ENCODE measurements at regions of chr13 and their contacts with region 1.

Region 1: GRCh38 chr13:80516818-80517348 is 176.0 kb upstream of the SPRY2 start:
- DNase-seq: peak in 2 of 4 experiments; percentile 2 to 5
- ATAC-seq: no peak
- H3K4me3 ChIP-seq: no peak overlapping the region
- H3K27ac ChIP-seq: no peak overlapping the region
- H3K4me1 ChIP-seq: no peaks in the 10 kb centered on the region
- H3K27me3 ChIP-seq: no peaks in the 10 kb centered on the region
- CTCF ChIP-seq: no peak
- EP300 ChIP-seq: no peak
- POLR2A ChIP-seq: no peak
- RAD21 ChIP-seq: no peak

Region 2: DNA sequence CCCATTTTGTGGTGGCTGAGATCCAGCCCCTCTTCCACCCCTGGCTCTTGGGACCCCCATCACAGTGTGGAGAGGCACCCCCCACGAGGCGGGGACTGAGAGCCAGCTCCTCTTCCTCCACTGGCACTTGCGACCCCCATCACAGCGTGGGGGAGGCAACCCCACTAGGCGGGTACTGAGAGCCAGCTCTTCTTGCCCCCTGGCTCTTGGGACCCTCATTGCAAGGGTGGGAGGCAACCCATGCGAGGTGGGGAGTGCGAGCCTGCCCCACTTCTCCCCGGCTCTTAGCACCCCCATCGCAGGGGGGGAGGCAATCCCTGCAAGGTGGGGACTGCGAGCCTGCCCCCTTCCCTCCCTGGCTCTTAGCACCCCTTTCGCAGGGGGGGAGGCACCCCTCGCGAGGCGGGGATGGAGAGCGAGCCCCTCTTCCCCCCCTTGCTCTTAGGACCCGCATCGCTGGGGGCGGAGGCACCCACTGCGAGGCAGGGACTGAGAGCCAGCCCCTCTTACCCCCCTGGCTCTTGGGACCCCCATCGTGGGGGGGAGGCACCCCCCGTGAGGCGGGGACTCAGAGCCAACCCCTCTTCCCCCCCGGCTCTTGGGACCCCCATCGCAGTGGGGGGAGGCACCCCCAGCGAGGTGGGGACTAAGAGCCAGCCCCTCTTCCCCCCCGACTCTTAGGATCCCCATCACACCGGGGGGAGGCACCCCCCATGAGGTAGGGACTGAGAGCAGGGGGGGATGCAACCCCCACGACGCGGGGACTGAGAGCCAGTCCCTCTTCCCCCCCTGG is 188.7 kb after region 1 on chr13:
- CTCF ChIA-PET with region 1: no interaction called
- POLR2A ChIA-PET with region 1: no interaction called
- in situ Hi-C with region 1: no loop called
- intact Hi-C with region 1: no loop called
- DNase-seq: no peak
- ATAC-seq: no peak; the same call in 2 of the 3 replicates
- H3K4me3 ChIP-seq: no peak overlapping the region
- H3K27ac ChIP-seq: no peak overlapping the region
- H3K4me1 ChIP-seq: peaks cover 0 to 13% of the 10 kb centered on the region in 2 experiments; a peak in 1 of 5 replicates
- H3K27me3 ChIP-seq: no peaks in the 10 kb centered on the region
- CTCF ChIP-seq: no peak
- EP300 ChIP-seq: no peak
- POLR2A ChIP-seq: no peak
- RAD21 ChIP-seq: no peak

Region 3: GRCh38 chr13:80894917-80895316 is 378.0 kb after region 1 on chr13:
- CTCF ChIA-PET with region 1: no interaction called
- POLR2A ChIA-PET with region 1: interaction called, 5 read pairs
- in situ Hi-C with region 1: loop called (anchors 5 kb)
- intact Hi-C with region 1: no loop called
- DNase-seq: peak in 3 of 4 experiments; percentile 3 to 10 (median 7)
- ATAC-seq: no peak
- H3K4me3 ChIP-seq: no peak overlapping the region
- H3K27ac ChIP-seq: no peak overlapping the region
- H3K4me1 ChIP-seq: no peaks in the 10 kb centered on the region
- H3K27me3 ChIP-seq: no peaks in the 10 kb centered on the region
- CTCF ChIP-seq: no peak
- EP300 ChIP-seq: no peak
- POLR2A ChIP-seq: no peak
- RAD21 ChIP-seq: no peak